HepG2 (cell line): ENCODE measurements at regions of chr18 and their contacts with region 1.

Region 1: GRCh38 chr18:31274915-31275314 is 43.0 kb upstream of the DSG1 start:
- DNase-seq: peak; percentile 58
- ATAC-seq: no peak
- H3K4me3 ChIP-seq: no peak overlapping the region
- H3K27ac ChIP-seq: no peak overlapping the region
- H3K4me1 ChIP-seq: peaks cover 63% of the 10 kb centered on the region
- H3K27me3 ChIP-seq: no peaks in the 10 kb centered on the region
- CTCF ChIP-seq: no peak
- EP300 ChIP-seq: no peak
- POLR2A ChIP-seq: no peak
- RAD21 ChIP-seq: no peak

Region 2: GRCh38 chr18:31230495-31230894 is 44.4 kb before region 1 on chr18:
- CTCF ChIA-PET with region 1: no interaction called
- POLR2A ChIA-PET with region 1: no interaction called
- in situ Hi-C with region 1: no loop called
- intact Hi-C with region 1: no loop called
- DNase-seq: peak; percentile 89
- ATAC-seq: peak; percentile 19; the same call in 1 of the 3 replicates
- H3K4me3 ChIP-seq: no peak overlapping the region
- H3K27ac ChIP-seq: peak overlapping the region; percentile 16
- H3K4me1 ChIP-seq: peaks cover 86% of the 10 kb centered on the region
- H3K27me3 ChIP-seq: no peaks in the 10 kb centered on the region
- CTCF ChIP-seq: no peak
- EP300 ChIP-seq: 0 out of 4 replicates have a peak, but pooled peaks of 1 of the 2 experiments have one; percentile 38
- POLR2A ChIP-seq: no peak
- RAD21 ChIP-seq: no peak

Region 3: DNA sequence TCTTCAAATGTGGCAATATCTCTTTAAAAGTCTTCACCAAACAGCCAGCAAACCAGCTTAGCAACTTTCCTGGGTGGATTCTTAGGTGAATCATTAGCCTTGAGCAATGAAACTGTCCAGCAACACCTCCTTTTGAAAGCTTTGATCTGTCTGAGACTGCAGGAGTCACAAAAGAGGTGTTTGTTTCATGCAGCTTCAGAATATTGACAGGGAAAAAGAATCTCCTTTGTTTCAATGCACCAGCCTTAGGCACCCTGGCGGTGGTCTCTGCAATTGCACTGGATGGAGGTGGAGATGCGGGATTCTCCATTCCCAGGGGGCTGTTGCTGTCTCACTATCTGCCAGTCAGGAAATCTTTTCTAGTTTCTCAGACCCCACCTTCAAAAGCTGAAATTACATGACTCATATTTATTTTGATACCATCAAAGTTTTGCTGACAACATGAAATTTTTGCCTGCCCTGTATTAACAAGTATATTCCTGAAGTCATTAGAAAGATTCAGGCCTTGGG is 33.0 kb before region 1 on chr18:
- CTCF ChIA-PET with region 1: no interaction called
- POLR2A ChIA-PET with region 1: interaction called, 7 read pairs
- in situ Hi-C with region 1: no loop called
- intact Hi-C with region 1: loop called (anchors 2 kb)
- DNase-seq: peak; percentile 98
- ATAC-seq: peak; percentile 86
- H3K4me3 ChIP-seq: no peak overlapping the region
- H3K27ac ChIP-seq: peak overlapping the region; percentile 94
- H3K4me1 ChIP-seq: peaks cover 61% of the 10 kb centered on the region
- H3K27me3 ChIP-seq: no peaks in the 10 kb centered on the region
- CTCF ChIP-seq: peak; percentile 82
- EP300 ChIP-seq: peak; percentile 29 to 94; a peak in 2 of 4 replicates
- POLR2A ChIP-seq: no peak
- RAD21 ChIP-seq: peak; percentile 80

Region 4: DNA sequence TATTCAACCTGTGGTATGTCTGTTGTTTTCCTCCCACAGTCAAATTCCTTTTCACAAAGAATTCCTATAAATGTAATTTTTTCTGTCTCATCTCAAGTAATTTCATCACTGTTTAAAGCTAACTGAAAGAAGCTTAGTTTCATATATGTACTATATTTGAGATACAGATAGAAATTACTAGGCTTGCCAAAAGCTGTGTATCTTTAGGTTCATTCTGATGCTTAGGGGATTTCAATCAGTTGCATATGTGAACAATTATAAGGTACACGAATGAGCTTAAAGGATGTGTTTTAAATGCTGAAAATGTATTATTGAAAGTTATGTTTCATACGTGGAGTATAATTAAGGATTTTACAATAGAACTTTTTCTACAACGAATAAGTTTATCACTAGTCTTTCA is 16.1 kb before region 1 on chr18:
- CTCF ChIA-PET with region 1: no interaction called
- POLR2A ChIA-PET with region 1: no interaction called
- in situ Hi-C with region 1: no loop called
- intact Hi-C with region 1: no loop called
- DNase-seq: no peak
- ATAC-seq: no peak
- H3K4me3 ChIP-seq: no peak overlapping the region
- H3K27ac ChIP-seq: no peak overlapping the region
- H3K4me1 ChIP-seq: peaks cover 23% of the 10 kb centered on the region
- H3K27me3 ChIP-seq: no peaks in the 10 kb centered on the region
- CTCF ChIP-seq: no peak
- EP300 ChIP-seq: no peak
- POLR2A ChIP-seq: no peak
- RAD21 ChIP-seq: no peak

Region 5: DNA sequence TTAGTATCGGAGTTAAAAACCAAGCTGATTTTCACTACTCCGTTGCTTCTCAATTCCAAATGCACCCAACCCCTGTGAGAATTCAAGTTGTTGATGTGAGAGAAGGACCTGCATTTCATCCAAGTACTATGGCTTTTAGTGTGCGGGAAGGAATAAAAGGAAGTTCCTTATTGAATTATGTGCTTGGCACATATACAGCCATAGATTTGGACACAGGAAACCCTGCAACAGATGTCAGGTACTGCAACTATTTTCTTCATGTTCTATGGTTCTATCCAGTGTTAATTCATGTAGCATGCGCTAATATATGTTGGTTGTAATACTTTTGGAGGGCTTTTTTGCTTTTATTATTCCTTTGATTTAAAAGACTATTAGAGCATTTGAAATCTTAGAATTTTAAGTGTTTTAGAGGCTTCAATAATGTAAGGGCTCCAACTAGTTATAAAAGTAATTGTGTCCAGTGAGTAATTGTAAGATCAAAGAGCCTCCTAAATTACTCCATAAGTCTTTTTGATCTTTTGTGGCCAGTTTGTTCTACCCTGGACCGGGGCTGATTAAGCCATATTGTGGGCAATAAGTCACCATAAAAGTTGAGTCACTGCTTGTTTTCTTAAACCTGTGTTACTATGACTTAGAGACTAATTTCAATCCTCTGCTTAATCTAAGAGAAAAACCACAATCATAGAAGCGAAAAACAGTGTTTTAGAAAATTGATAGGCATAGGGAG is 124.6 kb after region 1 on chr18:
- CTCF ChIA-PET with region 1: no interaction called
- POLR2A ChIA-PET with region 1: interaction called, 5 read pairs
- in situ Hi-C with region 1: no loop called
- intact Hi-C with region 1: loop called (anchors 2 kb)
- DNase-seq: peak; percentile 55
- ATAC-seq: no peak
- H3K4me3 ChIP-seq: no peak overlapping the region
- H3K27ac ChIP-seq: peak overlapping the region; percentile 93
- H3K4me1 ChIP-seq: peaks cover 92% of the 10 kb centered on the region
- H3K27me3 ChIP-seq: no peaks in the 10 kb centered on the region
- CTCF ChIP-seq: no peak
- EP300 ChIP-seq: peak in 1 of 2 experiments; percentile 79; a peak in 2 of 4 replicates
- POLR2A ChIP-seq: no peak
- RAD21 ChIP-seq: no peak

Region 6: DNA sequence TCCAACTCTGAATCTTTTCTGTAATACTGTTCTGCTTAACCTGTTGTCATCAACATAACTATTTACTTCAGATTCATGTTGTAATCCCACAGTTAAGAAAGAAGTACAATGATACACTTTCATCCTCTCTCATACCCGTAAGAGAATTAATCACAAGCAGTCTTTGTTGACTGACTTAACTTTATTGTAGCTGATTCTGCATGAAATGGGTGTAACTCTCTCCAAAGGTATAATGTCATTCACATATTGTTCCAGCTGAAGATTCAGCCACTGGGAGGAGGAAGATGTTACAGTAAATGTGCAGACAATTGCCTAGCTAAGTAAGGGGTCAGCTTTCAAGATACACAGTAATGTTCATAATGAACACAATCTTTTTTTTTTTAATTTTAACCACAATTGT is 209.5 kb after region 1 on chr18:
- CTCF ChIA-PET with region 1: no interaction called
- POLR2A ChIA-PET with region 1: no interaction called
- in situ Hi-C with region 1: no loop called
- intact Hi-C with region 1: loop called (anchors 5 kb)
- DNase-seq: no peak
- ATAC-seq: no peak
- H3K4me3 ChIP-seq: no peak overlapping the region
- H3K27ac ChIP-seq: no peak overlapping the region
- H3K4me1 ChIP-seq: no peaks in the 10 kb centered on the region
- H3K27me3 ChIP-seq: peaks cover 0 to 17% of the 10 kb centered on the region in 2 experiments; a peak in 2 of 5 replicates
- CTCF ChIP-seq: no peak
- EP300 ChIP-seq: no peak
- POLR2A ChIP-seq: no peak
- RAD21 ChIP-seq: no peak

Region 7: GRCh38 chr18:31497837-31498573 is 223.1 kb after region 1 on chr18 and contains the start of gene DSG2:
- CTCF ChIA-PET with region 1: no interaction called
- POLR2A ChIA-PET with region 1: no interaction called
- in situ Hi-C with region 1: no loop called
- intact Hi-C with region 1: loop called (anchors 5 kb)
- DNase-seq: peak; percentile 43
- ATAC-seq: peak; percentile 90
- H3K4me3 ChIP-seq: peak within 1 kb of the TSS; percentile 94 to 100 (median 99)
- H3K27ac ChIP-seq: peak within 1 kb of the TSS; percentile 82
- H3K4me1 ChIP-seq: peaks cover 27% of the 10 kb centered on the region
- H3K27me3 ChIP-seq: no peaks in the 10 kb centered on the region; a peak in 1 of 5 replicates
- CTCF ChIP-seq: no peak
- EP300 ChIP-seq: no peak
- POLR2A ChIP-seq: peak; percentile 58 to 70
- RAD21 ChIP-seq: no peak
- total RNA-seq, gene DSG2: 23.3 and 24.4 TPM in 2 replicates